Caco-2 (cell line): ENCODE measurements at regions of chr2 and their contacts with region 1.

Region 1: GRCh38 chr2:158034199-158034866 is 67.3 kb upstream of the UPP2 start:
- DNase-seq: peak; percentile 69 to 75
- H3K4me3 ChIP-seq: no peak overlapping the region
- H3K4me3 Mint-ChIP-seq: no peak overlapping the region
- H3K27ac Mint-ChIP-seq: no peak overlapping the region
- H3K4me1 ChIP-seq: no peaks in the 10 kb centered on the region
- H3K4me1 Mint-ChIP-seq: peaks cover 9% of the 10 kb centered on the region
- H3K27me3 ChIP-seq: no peaks in the 10 kb centered on the region
- H3K27me3 Mint-ChIP-seq: peaks cover 7% of the 10 kb centered on the region
- CTCF ChIP-seq: peak; percentile 71 to 74

Region 2: GRCh38 chr2:157857881-157858280 is 176.5 kb before region 1 on chr2:
- CTCF ChIA-PET with region 1: no interaction called
- POLR2A ChIA-PET with region 1: no interaction called
- intact Hi-C with region 1: no loop called
- DNase-seq: no peak
- H3K4me3 ChIP-seq: no peak overlapping the region
- H3K4me3 Mint-ChIP-seq: no peak overlapping the region
- H3K27ac Mint-ChIP-seq: no peak overlapping the region
- H3K4me1 ChIP-seq: no peaks in the 10 kb centered on the region
- H3K4me1 Mint-ChIP-seq: no peaks in the 10 kb centered on the region
- H3K27me3 ChIP-seq: no peaks in the 10 kb centered on the region
- H3K27me3 Mint-ChIP-seq: no peaks in the 10 kb centered on the region
- CTCF ChIP-seq: no peak

Region 3: GRCh38 chr2:158174495-158174894 is 140.2 kb after region 1 on chr2:
- CTCF ChIA-PET with region 1: interaction called, 11 read pairs
- POLR2A ChIA-PET with region 1: no interaction called
- intact Hi-C with region 1: loop called (anchors 2 kb)
- DNase-seq: no peak
- H3K4me3 ChIP-seq: no peak overlapping the region
- H3K4me3 Mint-ChIP-seq: no peak overlapping the region
- H3K27ac Mint-ChIP-seq: no peak overlapping the region
- H3K4me1 ChIP-seq: peaks cover 4% of the 10 kb centered on the region; the same call in 1 of the 2 replicates
- H3K4me1 Mint-ChIP-seq: no peaks in the 10 kb centered on the region
- H3K27me3 ChIP-seq: no peaks in the 10 kb centered on the region
- H3K27me3 Mint-ChIP-seq: no peaks in the 10 kb centered on the region
- CTCF ChIP-seq: no peak

Region 4: DNA sequence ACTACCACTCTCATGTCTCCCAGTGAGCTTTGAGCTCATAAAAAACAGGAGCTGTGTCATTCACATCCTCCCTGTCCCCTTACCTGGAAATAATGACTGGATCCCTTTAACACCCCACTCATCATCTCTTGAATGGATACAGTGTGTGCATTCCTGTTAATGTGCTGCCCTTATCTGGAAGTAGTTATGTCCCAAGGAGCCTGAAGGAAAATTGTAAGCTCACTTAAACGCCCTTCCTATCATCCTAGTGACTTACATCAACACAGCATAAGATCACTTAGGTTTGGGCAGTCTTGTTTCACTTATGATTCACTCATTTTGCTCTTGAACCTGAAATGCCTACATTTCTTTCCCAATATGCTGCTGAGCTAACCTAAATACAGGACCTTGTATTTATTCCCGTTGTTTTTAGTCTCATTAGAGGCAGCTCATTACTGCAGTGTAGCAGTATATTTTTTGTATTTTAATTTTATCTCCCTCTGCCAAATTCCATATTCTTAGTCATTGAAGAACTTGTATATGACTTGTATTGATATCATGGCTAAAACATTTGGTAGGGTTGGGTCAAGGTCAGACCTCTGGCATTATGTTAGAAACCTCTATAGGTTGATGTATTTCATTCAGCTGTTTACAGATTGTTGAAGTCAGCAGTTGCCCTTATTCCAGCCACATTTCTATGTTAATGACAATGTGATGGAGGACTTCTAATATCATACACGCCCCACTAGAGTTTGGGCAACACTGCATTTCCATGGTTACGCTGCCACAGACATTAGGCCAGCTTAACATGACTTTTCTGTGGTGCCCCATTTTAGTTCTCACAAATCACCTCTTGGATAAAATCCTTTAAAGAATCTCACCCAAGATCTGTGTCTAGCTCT is 495.3 kb after region 1 on chr2:
- CTCF ChIA-PET with region 1: no interaction called
- POLR2A ChIA-PET with region 1: no interaction called
- intact Hi-C with region 1: loop called (anchors 5 kb)
- DNase-seq: no peak
- H3K4me3 ChIP-seq: no peak overlapping the region
- H3K4me3 Mint-ChIP-seq: no peak overlapping the region
- H3K27ac Mint-ChIP-seq: peak overlapping the region; percentile 60
- H3K4me1 ChIP-seq: no peaks in the 10 kb centered on the region
- H3K4me1 Mint-ChIP-seq: peaks cover 8% of the 10 kb centered on the region
- H3K27me3 ChIP-seq: no peaks in the 10 kb centered on the region
- H3K27me3 Mint-ChIP-seq: no peaks in the 10 kb centered on the region
- CTCF ChIP-seq: no peak